ENCODE measurements at regions of chr17 and their contacts with region 1.

Region 1: DNA sequence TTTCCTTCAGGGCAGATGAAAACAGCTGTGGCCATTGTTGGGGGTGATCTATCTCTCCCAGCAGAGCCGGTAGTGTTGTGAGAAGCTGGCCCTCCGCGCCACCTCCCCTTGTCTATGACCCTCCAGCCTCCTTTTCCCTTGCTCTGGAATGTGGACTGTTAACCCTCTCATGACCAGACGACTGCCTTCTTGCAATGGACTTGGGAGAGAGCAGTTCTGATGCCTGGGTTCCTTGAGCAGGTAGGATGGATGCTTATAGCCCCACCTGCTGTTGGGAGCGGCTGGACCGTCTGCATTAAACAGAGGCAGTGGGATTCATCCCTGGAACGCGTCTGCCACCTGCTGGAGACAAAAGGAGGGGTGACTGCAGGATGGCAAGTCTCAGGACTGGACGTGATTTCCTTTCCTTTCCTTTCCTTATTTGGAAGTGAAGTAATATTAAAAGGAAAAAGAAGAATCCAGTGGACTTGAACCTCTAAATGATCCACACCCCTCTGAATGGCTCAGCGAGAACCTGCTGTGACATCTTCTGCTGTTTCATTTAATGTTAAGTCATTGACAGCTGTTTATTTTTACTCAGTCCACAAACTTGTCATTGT is 1.8 kb upstream of the SOST start:
- DNase-seq: peak; percentile 50
- H3K4me3 ChIP-seq: no peak overlapping the region
- H3K27me3 ChIP-seq: peaks cover 18% of the 10 kb centered on the region
- CTCF ChIP-seq: peak; percentile 99

Region 2: DNA sequence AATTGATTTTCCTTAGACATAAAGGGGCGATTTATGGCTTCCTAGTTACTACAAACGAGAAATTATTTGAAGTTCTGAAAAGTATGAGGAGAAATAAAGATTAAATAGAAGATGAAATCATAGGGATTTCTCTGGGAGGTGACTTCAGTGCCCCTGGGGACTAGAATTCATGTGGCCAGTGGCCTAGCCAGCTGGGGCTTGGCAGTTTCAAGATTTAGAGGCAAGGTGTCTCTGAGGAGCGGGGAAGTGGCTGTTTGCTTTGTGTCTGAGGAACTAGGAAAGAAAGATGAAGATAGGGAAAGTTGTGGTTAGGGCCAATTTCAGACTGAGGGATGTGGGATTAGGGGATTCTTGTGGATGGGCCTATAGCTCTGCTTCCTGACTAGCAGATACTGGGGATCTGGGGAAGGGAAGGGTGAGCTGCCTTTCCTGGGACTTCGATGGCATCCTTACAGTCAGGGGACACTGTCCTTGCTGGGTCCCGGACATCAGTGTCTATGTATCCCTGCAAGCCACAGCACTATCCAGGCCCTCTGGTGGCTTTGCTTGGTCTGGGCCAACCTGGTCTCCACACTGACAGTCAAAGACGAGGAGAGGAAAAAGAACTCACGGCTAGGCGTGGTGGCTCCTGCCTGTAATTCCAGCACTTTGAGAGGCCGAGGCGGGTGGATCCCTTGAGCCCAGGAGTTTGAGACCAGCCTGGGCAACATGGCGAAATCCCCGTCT is 76.3 kb before region 1 on chr17:
- CTCF ChIA-PET with region 1: interaction called, 784 read pairs
- POLR2A ChIA-PET with region 1: no interaction called
- DNase-seq: no peak
- H3K4me3 ChIP-seq: no peak overlapping the region
- H3K27me3 ChIP-seq: peaks cover 12% of the 10 kb centered on the region
- CTCF ChIP-seq: no peak

Region 3: DNA sequence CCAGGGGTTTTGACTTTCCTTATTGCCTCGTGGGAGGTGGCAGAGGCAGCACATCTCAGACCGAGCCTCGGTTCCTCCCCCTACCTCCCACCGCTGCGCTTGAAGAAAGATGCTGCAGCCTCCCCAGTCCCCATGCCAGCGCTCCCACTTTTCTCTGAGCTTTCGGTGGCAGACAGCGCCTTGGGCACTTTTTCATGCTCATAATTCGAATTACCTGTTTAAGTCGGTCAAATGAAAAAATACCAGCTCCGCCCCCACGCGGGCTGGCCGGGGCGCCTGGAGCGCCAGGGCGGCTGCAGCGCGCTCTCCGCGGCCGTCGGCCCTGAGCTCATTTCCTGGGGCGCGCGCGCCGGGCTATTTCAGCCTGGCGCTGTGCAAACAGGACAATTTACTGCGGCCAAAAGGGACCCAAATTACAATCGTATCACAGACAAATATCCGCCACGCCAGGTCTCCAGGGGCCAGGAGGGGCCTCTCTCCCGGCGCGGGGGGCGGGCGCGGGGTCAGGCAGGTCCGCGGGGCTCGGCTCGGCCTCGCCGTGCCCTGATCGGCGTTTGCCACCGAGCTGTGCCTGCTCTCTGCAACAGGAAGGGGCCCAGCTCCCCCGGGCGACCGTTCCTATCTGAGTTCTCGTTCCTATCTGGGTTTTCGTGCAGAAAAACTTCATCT is 46.7 kb before region 1 on chr17:
- CTCF ChIA-PET with region 1: interaction called, 784 read pairs
- POLR2A ChIA-PET with region 1: no interaction called
- DNase-seq: no peak
- H3K4me3 ChIP-seq: peak overlapping the region; percentile 44
- H3K27me3 ChIP-seq: no peaks in the 10 kb centered on the region
- CTCF ChIP-seq: no peak

Region 4: GRCh38 chr17:43745541-43745940 is 14.8 kb before region 1 on chr17:
- CTCF ChIA-PET with region 1: interaction called, 19 read pairs
- POLR2A ChIA-PET with region 1: no interaction called
- DNase-seq: no peak
- H3K4me3 ChIP-seq: no peak overlapping the region
- H3K27me3 ChIP-seq: no peaks in the 10 kb centered on the region
- CTCF ChIP-seq: no peak

Measured in BJ (cell line).